ENCODE measurements at regions of chr3 and their contacts with region 1.

Region 1: DNA sequence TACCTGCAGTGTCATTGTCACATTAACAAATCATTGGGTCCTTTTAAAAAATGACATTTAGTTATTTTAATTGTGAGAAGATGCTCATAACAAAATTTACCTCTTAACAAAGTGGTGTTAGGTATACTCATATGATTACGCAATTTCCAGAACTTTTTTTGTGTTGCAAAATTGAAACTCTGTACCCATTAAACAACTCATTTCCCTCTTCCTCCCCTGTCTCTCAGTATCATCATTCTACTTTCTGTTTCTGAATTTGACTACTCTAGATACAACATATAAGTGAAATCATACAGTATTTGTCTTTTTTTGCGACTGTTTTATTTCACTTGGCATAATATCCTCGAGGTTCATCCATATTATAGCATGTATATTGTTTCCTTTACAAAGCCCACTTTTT is 58.7 kb upstream of the CHST2 start:
- DNase-seq: no peak
- H3K4me3 Mint-ChIP-seq: no peak overlapping the region
- H3K27ac Mint-ChIP-seq: peak overlapping the region; percentile 42
- H3K4me1 Mint-ChIP-seq: peaks cover 22% of the 10 kb centered on the region
- H3K27me3 Mint-ChIP-seq: no peaks in the 10 kb centered on the region

Region 2: DNA sequence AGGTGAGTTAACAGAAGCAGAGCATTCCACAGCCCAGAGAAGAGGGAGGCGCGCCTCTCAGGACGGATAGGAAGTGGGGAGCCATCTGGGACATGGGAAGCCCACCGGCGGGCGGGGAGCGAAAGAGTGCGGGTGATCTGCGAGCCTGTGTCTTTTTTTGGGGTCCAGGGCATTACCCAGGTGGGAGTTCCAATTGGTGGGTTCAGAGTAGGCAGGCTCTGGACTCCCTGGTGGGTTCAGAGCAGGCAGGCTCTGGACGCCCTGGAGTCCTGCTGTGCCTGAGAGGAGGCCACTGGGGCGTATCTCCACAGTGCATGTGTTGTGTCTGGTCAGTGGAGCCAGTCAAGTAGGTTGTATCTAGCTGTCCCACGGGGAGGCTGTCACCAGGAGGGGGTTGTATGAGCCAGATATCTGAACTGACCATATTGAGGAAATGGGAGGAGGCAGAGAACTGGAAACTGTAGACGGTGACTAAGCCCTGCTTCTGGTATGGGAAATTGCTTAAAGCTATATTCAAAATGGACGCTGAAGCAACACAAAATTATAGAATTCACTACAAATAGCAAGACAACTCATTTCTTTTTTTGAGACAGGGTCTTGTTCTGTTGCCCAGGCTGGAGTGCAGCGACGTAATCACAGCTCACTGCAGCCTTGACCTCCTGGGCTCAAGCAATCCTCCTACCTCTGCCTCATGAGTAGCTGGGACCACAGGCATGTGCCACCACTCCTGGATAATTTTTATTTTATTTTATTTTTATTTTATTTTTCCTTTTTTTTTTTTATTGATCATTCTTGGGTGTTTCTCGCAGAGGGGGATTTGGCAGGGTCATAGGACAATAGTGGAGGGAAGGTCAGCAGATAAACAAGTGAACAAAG is 24.2 kb after region 1 on chr3:
- CTCF ChIA-PET with region 1: no interaction called
- POLR2A ChIA-PET with region 1: no interaction called
- intact Hi-C with region 1: loop called (anchors 1 kb)
- DNase-seq: peak; percentile 36
- H3K4me3 Mint-ChIP-seq: peak overlapping the region; percentile 40
- H3K27ac Mint-ChIP-seq: no peak overlapping the region
- H3K4me1 Mint-ChIP-seq: peaks cover 34% of the 10 kb centered on the region
- H3K27me3 Mint-ChIP-seq: peaks cover 6% of the 10 kb centered on the region

Region 3: DNA sequence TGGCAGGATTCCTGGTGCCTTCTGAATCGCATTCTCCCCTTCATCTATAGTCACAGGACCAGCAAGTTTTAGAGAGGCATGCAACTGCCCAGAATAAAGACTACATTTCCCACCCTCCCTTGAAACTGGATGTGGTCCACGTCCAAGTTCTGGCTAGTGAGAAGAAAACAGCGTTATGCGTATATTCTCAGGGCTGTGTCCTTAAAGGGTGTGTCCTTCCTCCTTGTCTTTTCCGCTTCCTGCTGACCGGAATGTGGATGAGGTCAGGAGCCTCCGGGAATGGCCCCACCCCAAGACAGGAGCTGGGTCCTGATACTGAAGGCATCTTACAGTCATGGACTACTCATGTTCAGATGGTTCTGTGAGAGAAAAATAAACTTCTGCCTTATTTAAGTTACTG is 78.9 kb after region 1 on chr3:
- CTCF ChIA-PET with region 1: no interaction called
- POLR2A ChIA-PET with region 1: no interaction called
- intact Hi-C with region 1: no loop called
- DNase-seq: no peak
- H3K4me3 Mint-ChIP-seq: no peak overlapping the region
- H3K27ac Mint-ChIP-seq: no peak overlapping the region
- H3K4me1 Mint-ChIP-seq: peaks cover 5% of the 10 kb centered on the region
- H3K27me3 Mint-ChIP-seq: peaks cover 2% of the 10 kb centered on the region

Region 4: DNA sequence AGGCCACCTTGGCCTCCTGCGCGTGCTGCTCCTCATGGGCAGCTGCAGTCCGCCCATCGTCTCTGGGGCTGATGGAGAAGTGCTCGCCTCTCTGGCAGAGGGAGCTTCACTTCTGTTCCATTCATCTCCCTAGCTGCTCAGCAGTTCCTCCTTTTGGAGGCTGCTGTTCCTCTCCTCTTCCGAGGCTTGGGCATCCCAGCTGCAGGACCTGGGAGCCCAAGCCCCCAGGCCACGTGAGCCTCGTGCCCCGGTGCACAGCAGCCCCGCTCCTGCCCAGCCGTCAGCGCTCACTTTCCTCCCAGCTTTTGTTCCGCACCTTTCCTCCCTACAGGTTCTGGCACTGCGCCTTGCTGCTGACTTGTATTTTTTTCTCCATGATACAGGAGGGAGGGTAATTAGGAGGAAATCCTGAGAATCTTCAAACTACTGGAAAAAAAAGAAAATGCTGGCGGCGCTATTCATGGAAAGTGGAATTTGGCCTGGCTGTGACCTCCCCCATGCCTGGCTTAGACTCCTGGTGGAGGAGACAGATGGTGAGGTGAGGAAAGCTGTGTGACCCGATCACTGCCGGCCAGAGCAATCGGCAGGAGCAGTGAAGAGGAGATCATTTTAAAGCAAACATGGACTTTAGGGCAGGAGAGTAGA is 268.8 kb after region 1 on chr3:
- CTCF ChIA-PET with region 1: no interaction called
- POLR2A ChIA-PET with region 1: no interaction called
- intact Hi-C with region 1: no loop called
- DNase-seq: no peak
- H3K4me3 Mint-ChIP-seq: no peak overlapping the region
- H3K27ac Mint-ChIP-seq: no peak overlapping the region
- H3K4me1 Mint-ChIP-seq: no peaks in the 10 kb centered on the region
- H3K27me3 Mint-ChIP-seq: no peaks in the 10 kb centered on the region